ENCODE measurements at regions of chr15 and their contacts with region 1.

Region 1: DNA sequence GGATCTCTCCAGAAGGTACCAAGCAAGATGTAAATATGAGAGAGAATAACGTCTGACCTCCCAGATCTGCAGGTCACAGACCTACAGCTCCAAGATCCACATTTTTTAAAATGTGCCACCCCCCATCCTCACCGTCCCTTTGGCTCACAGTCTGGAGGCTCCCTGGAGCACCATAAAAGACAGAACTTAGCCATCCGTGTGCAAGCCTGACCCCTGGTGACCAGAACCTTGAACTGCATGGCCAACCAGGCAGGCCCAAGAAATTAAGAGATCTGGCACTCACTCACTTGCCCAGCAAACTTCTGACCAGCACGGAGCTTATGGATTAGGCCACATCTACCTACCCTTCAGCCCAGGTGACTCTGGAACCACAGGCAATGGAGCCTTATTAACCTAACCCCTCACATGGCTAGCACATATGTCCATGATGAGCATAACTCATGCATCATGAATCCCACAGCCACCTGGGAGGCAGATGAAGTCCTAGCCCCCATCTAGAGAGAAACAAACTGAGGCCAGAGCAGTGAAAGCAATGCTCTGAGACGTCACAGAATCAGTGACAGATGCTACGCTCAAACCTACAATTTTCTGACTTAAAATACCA is 275.3 kb downstream of the UACA start:
- DNase-seq: peak; percentile 58 to 83 (median 75)
- ATAC-seq: peak; percentile 29
- H3K4me3 ChIP-seq: no peak overlapping the region
- H3K4me3 Mint-ChIP-seq: no peak overlapping the region
- H3K27ac ChIP-seq: no peak overlapping the region
- H3K27ac Mint-ChIP-seq: no peak overlapping the region
- H3K4me1 ChIP-seq: peaks cover 49% of the 10 kb centered on the region
- H3K4me1 Mint-ChIP-seq: peaks cover 67% of the 10 kb centered on the region
- H3K27me3 ChIP-seq: peaks cover 0 to 2% of the 10 kb centered on the region in 2 experiments
- H3K27me3 Mint-ChIP-seq: peaks cover 3% of the 10 kb centered on the region
- CTCF ChIP-seq: peak; percentile 90

Region 2: GRCh38 chr15:69523010-69524001 is 964.8 kb before region 1 on chr15:
- CTCF ChIA-PET with region 1: interaction called, 3 read pairs
- POLR2A ChIA-PET with region 1: no interaction called
- intact Hi-C with region 1: loop called in 1 of 2 experiments (anchors 5 kb)
- DNase-seq: peak; percentile 29 to 78 (median 60)
- ATAC-seq: peak; percentile 40
- H3K4me3 ChIP-seq: no peak overlapping the region
- H3K4me3 Mint-ChIP-seq: no peak overlapping the region
- H3K27ac ChIP-seq: no peak overlapping the region
- H3K27ac Mint-ChIP-seq: no peak overlapping the region
- H3K4me1 ChIP-seq: no peaks in the 10 kb centered on the region
- H3K4me1 Mint-ChIP-seq: no peaks in the 10 kb centered on the region
- H3K27me3 ChIP-seq: no peaks in the 10 kb centered on the region
- H3K27me3 Mint-ChIP-seq: peaks cover 11% of the 10 kb centered on the region
- CTCF ChIP-seq: peak; percentile 45

Region 3: DNA sequence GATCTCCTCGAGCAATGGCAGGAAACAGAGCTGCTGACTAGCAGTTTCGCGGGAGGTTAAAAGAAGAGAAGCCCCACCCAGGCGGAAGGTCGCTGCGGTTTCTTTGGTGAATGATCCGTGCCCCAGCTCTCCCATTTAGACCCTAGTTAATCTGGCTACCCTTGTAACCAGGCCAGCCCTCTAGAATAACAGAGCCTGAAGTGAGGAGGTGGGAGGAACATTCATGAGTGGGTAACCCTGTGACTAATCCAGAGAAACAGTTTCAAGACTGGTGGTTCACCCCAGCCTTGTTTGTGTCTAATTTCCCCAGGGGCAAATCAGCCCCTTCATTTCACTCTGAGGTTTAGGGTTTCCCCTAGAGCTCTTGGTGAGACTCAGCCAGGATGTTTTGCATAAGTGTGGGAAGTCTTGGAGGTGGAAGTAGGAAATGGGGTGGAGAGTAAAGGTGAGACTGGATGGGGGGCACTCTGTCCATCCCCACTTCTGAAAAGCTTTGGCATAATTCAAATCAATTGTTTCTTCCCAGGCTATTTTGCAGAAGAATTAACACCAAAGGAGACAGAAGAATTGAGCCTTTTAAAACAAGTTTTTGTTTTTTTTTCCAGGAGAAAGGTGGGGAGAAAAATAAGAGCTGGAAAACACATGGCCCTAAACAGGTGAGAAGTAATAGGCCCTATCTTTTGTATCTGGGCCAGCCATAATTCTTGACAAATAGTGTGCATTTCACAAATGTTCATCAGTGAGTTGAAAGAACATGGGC is 732.4 kb before region 1 on chr15:
- CTCF ChIA-PET with region 1: interaction called, 3 read pairs
- POLR2A ChIA-PET with region 1: interaction called, 3 read pairs
- intact Hi-C with region 1: loop called (anchors 1 to 2 kb)
- DNase-seq: peak; percentile 16 to 89 (median 77)
- ATAC-seq: peak; percentile 70
- H3K4me3 ChIP-seq: peak overlapping the region; percentile 4 to 5
- H3K4me3 Mint-ChIP-seq: peak overlapping the region; percentile 58
- H3K27ac ChIP-seq: no peak overlapping the region
- H3K27ac Mint-ChIP-seq: peak overlapping the region; percentile 86
- H3K4me1 ChIP-seq: peaks cover 72% of the 10 kb centered on the region
- H3K4me1 Mint-ChIP-seq: peaks cover 75% of the 10 kb centered on the region
- H3K27me3 ChIP-seq: peaks cover 0 to 3% of the 10 kb centered on the region in 2 experiments
- H3K27me3 Mint-ChIP-seq: peaks cover 7% of the 10 kb centered on the region
- CTCF ChIP-seq: no peak

Region 4: GRCh38 chr15:70299931-70300869 is 187.9 kb before region 1 on chr15:
- CTCF ChIA-PET with region 1: no interaction called
- POLR2A ChIA-PET with region 1: no interaction called
- intact Hi-C with region 1: loop called (anchors 10 kb)
- DNase-seq: peak; percentile 54 to 92 (median 71)
- ATAC-seq: peak; percentile 90
- H3K4me3 ChIP-seq: no peak overlapping the region
- H3K4me3 Mint-ChIP-seq: peak overlapping the region; percentile 44
- H3K27ac ChIP-seq: no peak overlapping the region
- H3K27ac Mint-ChIP-seq: peak overlapping the region; percentile 86
- H3K4me1 ChIP-seq: peaks cover 20% of the 10 kb centered on the region
- H3K4me1 Mint-ChIP-seq: peaks cover 18% of the 10 kb centered on the region
- H3K27me3 ChIP-seq: peaks cover 0 to 22% of the 10 kb centered on the region in 2 experiments
- H3K27me3 Mint-ChIP-seq: no peaks in the 10 kb centered on the region
- CTCF ChIP-seq: no peak

Region 5: DNA sequence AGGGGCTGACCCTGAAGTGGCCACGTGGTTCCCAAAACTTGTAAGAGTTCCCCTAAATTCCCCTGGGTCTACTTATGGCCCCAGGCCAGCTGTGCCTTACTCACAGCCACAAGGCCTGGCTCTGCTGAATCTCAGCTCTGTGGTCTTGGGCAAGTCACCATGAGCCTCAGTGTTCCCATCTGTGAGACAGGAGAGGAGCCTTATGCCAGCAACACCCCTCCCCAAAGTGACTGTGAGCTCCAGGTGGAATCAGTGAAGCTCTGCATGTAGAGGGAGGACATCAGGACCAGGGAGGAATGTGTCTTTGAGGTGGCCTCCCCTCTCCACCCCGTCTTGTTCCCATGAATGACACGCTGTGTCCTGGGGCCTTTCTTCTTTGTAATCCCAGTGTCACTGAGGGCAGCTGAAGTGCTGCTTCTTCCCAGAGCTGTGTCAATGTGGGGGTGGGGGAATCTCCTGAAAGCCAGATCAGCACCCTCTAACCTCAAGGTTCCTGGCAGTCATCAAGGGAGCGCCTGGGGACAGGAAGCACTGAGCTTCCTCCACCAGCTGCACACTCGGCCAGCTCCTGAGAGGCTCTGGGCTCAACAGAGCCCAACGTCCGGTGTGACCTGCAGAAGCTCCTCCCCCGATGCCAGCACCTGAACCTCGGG is 16.3 kb after region 1 on chr15:
- CTCF ChIA-PET with region 1: interaction called, 36 read pairs
- POLR2A ChIA-PET with region 1: interaction called, 14 read pairs
- intact Hi-C with region 1: loop called in 1 of 2 experiments (anchors 2 kb)
- DNase-seq: peak in 2 of 9 experiments; percentile 18 to 49
- ATAC-seq: no peak
- H3K4me3 ChIP-seq: peak overlapping the region in 1 of 2 experiments; percentile 13
- H3K4me3 Mint-ChIP-seq: peak overlapping the region; percentile 53
- H3K27ac ChIP-seq: no peak overlapping the region
- H3K27ac Mint-ChIP-seq: no peak overlapping the region
- H3K4me1 ChIP-seq: peaks cover 45% of the 10 kb centered on the region
- H3K4me1 Mint-ChIP-seq: peaks cover 57% of the 10 kb centered on the region
- H3K27me3 ChIP-seq: no peaks in the 10 kb centered on the region
- H3K27me3 Mint-ChIP-seq: no peaks in the 10 kb centered on the region
- CTCF ChIP-seq: no peak

Region 6: DNA sequence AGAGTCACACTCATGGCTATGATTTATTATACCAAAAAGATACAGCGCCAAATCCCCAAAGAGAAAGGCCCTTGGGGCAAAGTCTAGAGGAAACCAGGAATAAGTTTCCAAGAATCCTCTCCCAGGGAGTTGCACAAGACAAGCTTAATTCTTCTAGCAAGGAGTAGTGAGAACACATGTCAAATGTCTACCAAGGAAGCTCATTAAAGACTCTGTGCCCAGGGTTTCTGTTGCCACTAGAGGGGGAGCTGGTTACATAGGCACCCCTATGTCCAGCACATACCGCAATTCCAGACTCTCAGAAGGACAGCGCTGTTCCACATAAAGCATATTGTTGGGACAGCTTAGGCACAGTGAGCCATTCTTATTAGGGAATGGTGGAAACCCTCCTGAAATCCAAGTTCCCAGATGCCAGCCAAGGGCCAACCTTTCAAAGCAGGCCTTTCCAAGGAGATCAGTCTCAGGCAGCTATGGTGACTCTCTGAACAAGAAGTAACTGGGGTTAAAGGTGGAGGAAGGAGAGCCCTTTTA is 81.1 kb after region 1 on chr15:
- CTCF ChIA-PET with region 1: interaction called, 10 read pairs
- POLR2A ChIA-PET with region 1: no interaction called
- intact Hi-C with region 1: no loop called
- DNase-seq: peak in 1 of 9 experiments; percentile 45
- ATAC-seq: no peak
- H3K4me3 ChIP-seq: no peak overlapping the region
- H3K4me3 Mint-ChIP-seq: no peak overlapping the region
- H3K27ac ChIP-seq: no peak overlapping the region
- H3K27ac Mint-ChIP-seq: no peak overlapping the region
- H3K4me1 ChIP-seq: peaks cover 6% of the 10 kb centered on the region
- H3K4me1 Mint-ChIP-seq: peaks cover 4% of the 10 kb centered on the region
- H3K27me3 ChIP-seq: no peaks in the 10 kb centered on the region
- H3K27me3 Mint-ChIP-seq: no peaks in the 10 kb centered on the region
- CTCF ChIP-seq: no peak

Measured in CD8-positive, alpha-beta T cell (primary cell).